Thyroid gland (tissue), 4 donors: ENCODE measurements at regions of chr7 and their contacts with region 1.

Region 1: GRCh38 chr7:136009488-136010079 is 32.4 kb upstream of the MTPN start:
- DNase-seq: no peak
- H3K4me3 ChIP-seq: no peak overlapping the region
- H3K27ac ChIP-seq: no peak overlapping the region
- H3K4me1 ChIP-seq: peaks cover 0 to 6% of the 10 kb centered on the region in 2 donors
- H3K27me3 ChIP-seq: no peaks in the 10 kb centered on the region
- CTCF ChIP-seq: peak in 5 of 6 experiments; percentile 52 to 87 (median 61)
- POLR2A ChIP-seq: no peak

Region 2: GRCh38 chr7:135597926-135598305 is 411.7 kb before region 1 on chr7:
- intact Hi-C with region 1: no loop called
- DNase-seq: no peak
- H3K4me3 ChIP-seq: no peak overlapping the region
- H3K27ac ChIP-seq: no peak overlapping the region
- H3K4me1 ChIP-seq: no peaks in the 10 kb centered on the region
- H3K27me3 ChIP-seq: no peaks in the 10 kb centered on the region
- CTCF ChIP-seq: no peak
- POLR2A ChIP-seq: no peak

Region 3: DNA sequence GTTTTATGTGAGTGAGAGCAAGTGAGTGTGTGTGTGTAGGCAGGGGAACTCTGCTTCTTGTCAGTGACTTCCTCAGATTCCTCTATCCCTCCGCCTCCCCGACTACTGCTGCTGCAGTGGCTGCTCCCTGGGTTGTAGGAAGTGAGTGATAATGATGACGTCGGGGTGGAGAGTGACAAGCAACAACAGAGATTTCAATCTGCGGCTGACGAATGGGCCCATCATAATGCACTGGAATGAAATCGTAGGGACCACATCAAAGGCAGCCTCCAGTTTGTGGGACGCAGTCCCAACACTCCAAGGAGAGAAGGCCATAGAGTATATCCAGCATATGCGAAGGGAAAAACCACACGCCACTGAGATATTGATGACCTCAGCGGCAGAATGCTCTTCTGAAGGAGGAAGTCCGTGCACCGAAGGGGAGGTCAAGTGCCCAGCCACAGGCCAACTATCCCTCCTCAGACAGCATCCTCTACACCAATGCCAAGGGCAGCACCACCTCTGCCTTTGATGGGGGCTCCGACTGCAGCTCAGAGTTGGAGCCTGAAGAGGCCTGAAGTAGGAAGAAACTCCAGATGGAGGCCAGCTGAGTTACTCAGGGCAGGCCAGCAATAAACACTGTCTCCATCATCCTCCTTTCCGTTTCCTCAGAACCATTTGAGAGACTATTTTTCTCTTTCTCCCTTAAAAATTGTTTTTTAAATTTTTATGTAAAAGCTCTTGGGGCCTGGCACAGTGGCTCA is 358.6 kb before region 1 on chr7:
- intact Hi-C with region 1: loop called (anchors 10 kb)
- DNase-seq: no peak
- H3K4me3 ChIP-seq: no peak overlapping the region
- H3K27ac ChIP-seq: no peak overlapping the region
- H3K4me1 ChIP-seq: peaks cover 3 to 4% of the 10 kb centered on the region in 2 donors
- H3K27me3 ChIP-seq: no peaks in the 10 kb centered on the region
- CTCF ChIP-seq: no peak
- POLR2A ChIP-seq: no peak

Region 4: DNA sequence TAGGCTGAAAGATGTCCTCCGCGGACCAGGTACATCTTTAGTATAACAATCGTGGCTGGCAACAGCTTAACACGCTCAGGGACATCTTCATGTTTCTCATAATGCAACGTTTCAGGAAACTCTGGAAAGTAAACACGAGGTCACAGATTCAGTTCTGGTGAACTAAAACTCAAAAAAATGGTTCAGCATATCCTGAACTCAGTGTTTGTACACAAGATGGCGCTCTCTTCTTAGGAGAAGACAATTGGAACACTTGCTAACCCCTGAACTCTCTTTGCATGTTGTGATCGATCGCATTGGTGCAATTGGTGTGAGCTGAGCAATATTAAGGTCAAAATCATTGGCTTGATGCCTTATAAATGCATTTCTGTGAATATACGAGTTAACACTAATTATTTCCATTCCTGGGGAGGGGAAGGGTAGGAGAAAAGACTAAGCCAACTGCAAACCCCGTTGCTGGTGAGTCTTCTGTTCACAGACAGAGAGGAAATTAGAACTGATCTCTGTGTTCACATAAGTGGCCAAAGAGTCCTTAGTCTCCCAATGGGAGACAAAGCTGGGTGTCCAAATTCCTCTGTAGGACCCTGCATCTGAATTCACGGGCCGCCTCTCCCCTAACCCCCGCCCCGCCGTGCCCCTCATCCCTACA is 208.4 kb before region 1 on chr7:
- intact Hi-C with region 1: loop called (anchors 2 kb)
- DNase-seq: no peak
- H3K4me3 ChIP-seq: no peak overlapping the region
- H3K27ac ChIP-seq: peak overlapping the region; percentile 37 to 70 (median 52)
- H3K4me1 ChIP-seq: peaks cover 42 to 55% of the 10 kb centered on the region in 2 donors
- H3K27me3 ChIP-seq: no peaks in the 10 kb centered on the region
- CTCF ChIP-seq: peak; percentile 51 to 98 (median 80)
- POLR2A ChIP-seq: no peak